Dendritic cell treated with granulocyte-macrophage colony-stimulating factor and Interleukin-4, amounts not matched to agents 40 ng/mL and 50 ng/mL, for 4 days (primary cell): ENCODE measurements at regions of chr4 and their contacts with region 1.

Region 1: DNA sequence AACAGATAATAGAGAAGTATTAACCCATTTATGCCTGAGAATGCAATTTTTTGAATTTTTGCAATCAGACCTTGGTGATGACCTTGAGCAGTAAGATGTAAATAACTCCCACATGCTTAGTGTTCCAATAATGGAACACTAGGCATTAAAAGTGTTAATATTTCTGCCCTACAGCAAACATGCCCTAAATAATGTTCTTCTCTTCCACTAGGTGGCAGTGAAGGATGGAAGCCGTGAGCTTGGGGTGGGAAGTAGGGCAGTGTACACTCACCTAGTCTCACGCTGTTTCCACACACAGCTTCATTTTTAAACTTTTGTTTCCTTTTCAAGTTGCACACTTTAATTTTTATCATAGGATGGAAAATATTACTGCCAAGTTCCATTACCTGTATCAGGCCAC is 613.1 kb upstream of the HS3ST1 start:
- H3K4me3 Mint-ChIP-seq: no peak overlapping the region
- H3K27ac Mint-ChIP-seq: no peak overlapping the region
- H3K4me1 Mint-ChIP-seq: no peaks in the 10 kb centered on the region
- H3K27me3 Mint-ChIP-seq: no peaks in the 10 kb centered on the region

Region 2: DNA sequence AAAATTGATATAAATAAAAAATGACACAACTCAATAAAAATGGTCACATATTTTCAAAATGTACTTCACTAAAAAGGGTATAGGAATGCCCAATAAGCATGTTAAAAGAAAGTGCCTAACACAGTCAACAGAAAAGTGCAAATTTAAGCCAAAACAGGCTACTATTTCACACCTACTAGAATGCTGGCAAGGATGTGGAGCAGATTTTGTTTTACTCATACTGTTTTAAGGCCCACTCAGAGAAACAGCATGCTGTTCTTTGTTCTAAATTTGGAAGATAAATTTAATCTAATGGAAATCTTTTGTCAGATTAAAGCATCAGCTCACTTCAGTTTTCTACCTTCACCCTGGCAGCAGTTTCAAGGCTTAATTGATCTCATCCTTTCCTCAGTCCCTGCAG is 36.4 kb before region 1 on chr4:
- intact Hi-C with region 1: no loop called
- H3K4me3 Mint-ChIP-seq: no peak overlapping the region
- H3K27ac Mint-ChIP-seq: no peak overlapping the region
- H3K4me1 Mint-ChIP-seq: no peaks in the 10 kb centered on the region
- H3K27me3 Mint-ChIP-seq: no peaks in the 10 kb centered on the region

Region 3: DNA sequence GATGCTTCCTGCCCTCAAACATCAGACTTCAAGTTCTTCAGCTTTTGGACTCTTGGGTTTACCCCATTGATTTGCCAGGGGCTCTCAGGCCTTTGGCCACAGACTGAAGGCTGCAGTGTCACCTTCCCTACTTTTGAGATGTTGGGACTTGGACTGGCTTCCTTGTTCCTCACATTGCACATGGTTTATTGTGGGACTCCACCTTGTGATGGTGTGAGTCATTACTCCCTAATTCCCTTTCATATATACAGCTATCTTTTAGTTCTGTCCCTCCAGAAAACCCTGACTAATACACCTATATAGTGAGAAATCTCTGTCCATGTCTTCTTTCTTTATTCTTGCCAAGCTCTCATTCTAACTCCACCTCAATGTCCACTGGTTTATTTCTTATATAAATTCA is 123.8 kb after region 1 on chr4:
- intact Hi-C with region 1: loop called (anchors 1 kb)
- H3K4me3 Mint-ChIP-seq: no peak overlapping the region
- H3K27ac Mint-ChIP-seq: no peak overlapping the region
- H3K4me1 Mint-ChIP-seq: peaks cover 23% of the 10 kb centered on the region
- H3K27me3 Mint-ChIP-seq: no peaks in the 10 kb centered on the region